Naive thymus-derived CD4-positive, alpha-beta T cell (primary cell): ENCODE measurements at regions of chr1 and their contacts with region 1.

Region 1: GRCh38 chr1:219209578-219209977 is 35.9 kb downstream of the LYPLAL1 start:
- DNase-seq: no peak
- ATAC-seq: no peak
- H3K4me3 ChIP-seq: no peak overlapping the region
- H3K4me3 Mint-ChIP-seq: no peak overlapping the region
- H3K27ac ChIP-seq: no peak overlapping the region
- H3K27ac Mint-ChIP-seq: no peak overlapping the region
- H3K4me1 ChIP-seq: no peaks in the 10 kb centered on the region
- H3K4me1 Mint-ChIP-seq: peaks cover 0 to 3% (median 0%) of the 10 kb centered on the region in 7 donors
- H3K27me3 ChIP-seq: no peaks in the 10 kb centered on the region
- H3K27me3 Mint-ChIP-seq: no peaks in the 10 kb centered on the region

Region 2: GRCh38 chr1:219660666-219661463 is 451.3 kb after region 1 on chr1:
- CTCF ChIA-PET with region 1: no interaction called
- POLR2A ChIA-PET with region 1: no interaction called
- intact Hi-C with region 1: loop called in 1 of 2 experiments (anchors 10 kb)
- DNase-seq: peak in 2 of 9 donors; percentile 9 to 48
- ATAC-seq: peak; percentile 57
- H3K4me3 ChIP-seq: no peak overlapping the region
- H3K4me3 Mint-ChIP-seq: peak overlapping the region in 4 of 10 donors; percentile 24 to 67 (median 54)
- H3K27ac ChIP-seq: no peak overlapping the region
- H3K27ac Mint-ChIP-seq: no peak overlapping the region
- H3K4me1 ChIP-seq: no peaks in the 10 kb centered on the region
- H3K4me1 Mint-ChIP-seq: peaks cover 0 to 5% (median 4%) of the 10 kb centered on the region in 7 donors
- H3K27me3 ChIP-seq: no peaks in the 10 kb centered on the region
- H3K27me3 Mint-ChIP-seq: peaks cover 9 to 48% (median 34%) of the 10 kb centered on the region in 5 donors

Region 3: DNA sequence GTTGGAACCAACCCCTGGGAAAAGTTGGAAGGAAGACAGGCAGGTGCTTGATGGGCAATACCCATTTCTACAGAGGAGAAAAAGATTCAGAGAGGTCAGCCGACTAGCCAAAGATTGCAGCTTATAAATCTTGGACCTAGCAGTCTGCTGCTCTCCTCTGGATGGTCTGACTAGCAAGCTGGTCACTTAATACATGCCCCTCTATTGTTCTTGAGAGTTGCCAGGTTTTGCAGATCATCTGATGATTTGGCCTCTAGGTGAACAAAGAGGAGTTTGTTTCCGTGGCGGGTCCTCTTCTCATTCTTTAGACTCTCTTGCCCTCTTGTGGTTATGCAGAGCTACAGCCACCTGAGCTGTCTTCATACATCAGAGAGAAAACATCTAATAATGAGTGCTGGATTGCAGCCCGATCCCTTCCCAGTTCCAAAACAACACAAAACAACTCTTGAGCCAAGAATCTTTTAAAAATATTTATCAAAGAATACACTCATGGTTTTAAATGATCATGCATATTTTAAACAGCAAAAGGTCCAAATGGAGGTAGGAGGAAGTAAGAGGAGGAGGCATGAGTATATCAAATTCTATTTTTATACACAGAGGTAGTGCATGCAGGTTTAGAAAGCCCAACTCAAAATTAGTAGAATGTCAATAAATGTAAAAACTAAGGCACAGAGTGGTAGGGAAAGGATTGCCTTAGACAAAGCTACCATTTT is 603.1 kb after region 1 on chr1:
- CTCF ChIA-PET with region 1: no interaction called
- POLR2A ChIA-PET with region 1: no interaction called
- intact Hi-C with region 1: loop called in 1 of 2 experiments (anchors 10 kb)
- DNase-seq: no peak
- ATAC-seq: no peak
- H3K4me3 ChIP-seq: no peak overlapping the region
- H3K4me3 Mint-ChIP-seq: no peak overlapping the region
- H3K27ac ChIP-seq: no peak overlapping the region
- H3K27ac Mint-ChIP-seq: no peak overlapping the region
- H3K4me1 ChIP-seq: no peaks in the 10 kb centered on the region
- H3K4me1 Mint-ChIP-seq: no peaks in the 10 kb centered on the region
- H3K27me3 ChIP-seq: no peaks in the 10 kb centered on the region
- H3K27me3 Mint-ChIP-seq: peaks cover 0 to 21% (median 16%) of the 10 kb centered on the region in 5 donors